Posterior cingulate gyrus (tissue), 11 donors: ENCODE measurements at regions of chr17 and their contacts with region 1.

Region 1: GRCh38 chr17:28951991-28952975 is 965 bp upstream of the PHF12 start:
- DNase-seq: peak; percentile 96 to 99 (median 98)

Region 2: DNA sequence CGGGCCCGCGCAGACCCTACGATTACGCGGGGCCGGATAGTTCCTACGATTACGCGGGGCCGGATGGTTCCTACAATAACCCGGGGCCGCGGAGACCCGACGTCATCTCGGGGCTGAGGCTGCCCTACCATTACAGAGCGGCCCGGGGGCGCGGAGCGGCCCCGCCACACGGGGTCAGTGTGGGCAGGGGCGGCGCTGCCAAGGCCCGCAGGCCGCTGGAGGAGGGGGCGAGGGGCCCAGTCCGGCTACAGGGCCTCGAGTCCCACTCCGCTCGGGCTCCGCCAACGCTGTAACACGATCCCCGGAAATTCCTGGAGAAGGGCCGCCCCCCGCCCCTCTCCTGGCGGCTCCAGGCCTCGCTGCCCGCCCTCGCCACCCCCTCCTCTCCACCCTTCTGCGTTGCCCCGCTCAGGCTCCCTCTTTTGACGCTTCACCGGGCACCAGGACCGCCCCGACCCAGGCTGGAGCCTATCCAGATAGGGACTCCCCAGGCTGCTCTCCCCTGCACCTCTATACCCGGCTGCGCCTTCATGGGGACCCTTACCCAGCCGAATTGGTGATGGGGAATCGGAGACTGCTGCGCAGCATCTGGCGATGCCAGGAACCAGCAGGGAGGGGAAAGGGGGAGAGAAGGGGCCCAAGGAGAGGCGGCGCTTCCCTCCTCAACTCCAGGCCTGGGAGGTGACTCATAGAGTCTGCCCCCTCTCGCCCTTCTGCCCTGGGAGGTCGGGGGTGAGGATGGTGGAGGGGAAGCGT is 234.5 kb before region 1 on chr17 and contains the start of gene RAB34:
- intact Hi-C with region 1: loop called (anchors 2 kb)
- DNase-seq: peak in 4 of 10 donors; percentile 22 to 76 (median 44)

Region 3: DNA sequence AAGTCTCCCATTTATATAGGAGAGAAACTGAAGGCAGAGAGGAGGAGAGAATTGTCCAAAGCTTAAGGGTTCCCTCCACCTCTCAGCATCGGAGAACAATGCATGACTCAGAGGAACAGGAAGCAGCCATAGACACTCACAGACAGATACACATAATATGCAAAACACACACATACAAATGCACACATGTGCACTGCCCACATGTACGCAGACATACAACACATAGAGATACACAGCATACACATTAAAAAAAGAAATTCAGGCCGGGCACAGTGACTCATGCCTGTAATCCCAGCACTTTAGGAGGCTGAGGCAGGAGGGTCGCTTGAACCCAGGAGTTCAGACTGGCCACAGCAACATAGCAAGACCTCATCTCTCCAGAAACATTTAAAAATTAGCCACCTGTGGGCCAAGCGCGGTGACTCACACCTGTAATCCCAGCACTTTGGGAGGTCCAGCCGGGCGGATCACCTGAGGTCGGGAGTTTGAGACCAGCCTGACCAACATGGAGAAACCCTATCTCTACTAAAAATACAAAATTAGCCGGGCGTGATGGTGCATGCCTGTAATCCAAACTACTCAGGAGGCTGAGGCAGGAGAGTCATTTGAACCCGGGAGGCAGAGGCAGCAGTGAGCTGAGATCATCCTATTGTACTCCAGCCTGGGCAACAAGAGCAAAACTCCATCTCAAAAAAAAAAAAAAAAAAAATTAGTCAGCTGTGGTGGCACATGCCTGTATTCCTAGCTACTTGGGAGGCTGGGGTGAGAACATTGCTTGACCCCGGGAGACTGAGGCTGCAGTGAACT is 86.1 kb before region 1 on chr17:
- intact Hi-C with region 1: no loop called
- DNase-seq: no peak

Region 4: GRCh38 chr17:28902819-28903545 is 49.3 kb before region 1 on chr17 and contains the start of gene DHRS13:
- intact Hi-C with region 1: loop called (anchors 5 kb)
- DNase-seq: peak; percentile 70 to 97 (median 80)

Region 5: DNA sequence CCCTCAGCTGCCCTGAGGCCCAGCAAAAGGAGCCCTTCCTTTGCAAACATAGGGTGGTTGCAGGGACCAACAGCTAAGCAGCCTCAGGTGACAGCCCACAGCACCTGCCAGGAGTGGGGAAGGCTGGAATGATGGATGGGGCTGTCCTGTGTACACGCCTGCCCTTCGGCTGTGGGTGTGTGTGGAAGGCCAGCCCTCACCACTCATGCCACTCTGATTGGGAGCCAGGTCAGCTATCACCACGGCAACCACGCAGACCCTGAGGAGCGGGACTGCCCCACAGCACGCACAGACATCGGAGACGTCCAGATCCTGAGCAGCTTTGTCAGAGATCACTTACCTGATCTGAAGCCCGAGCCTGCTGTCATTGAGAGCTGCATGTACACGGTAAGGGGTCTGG is 102.6 kb after region 1 on chr17:
- intact Hi-C with region 1: no loop called
- DNase-seq: no peak